ENCODE measurements at regions of chr10 and their contacts with region 1.

Region 1: GRCh38 chr10:8331883-8332729 is 277.6 kb downstream of the GATA3 start:
- DNase-seq: peak; percentile 78 to 96 (median 93)
- ATAC-seq: peak; percentile 97
- H3K4me3 ChIP-seq: peak overlapping the region; percentile 71
- H3K4me3 Mint-ChIP-seq: peak overlapping the region; percentile 65 to 92 (median 84)
- H3K27ac ChIP-seq: peak overlapping the region; percentile 83
- H3K27ac Mint-ChIP-seq: peak overlapping the region; percentile 88 to 97 (median 93)
- H3K4me1 ChIP-seq: peaks cover 9 to 23% of the 10 kb centered on the region in 2 donors
- H3K4me1 Mint-ChIP-seq: peaks cover 21 to 53% (median 40%) of the 10 kb centered on the region in 7 donors
- H3K27me3 ChIP-seq: no peaks in the 10 kb centered on the region
- H3K27me3 Mint-ChIP-seq: peaks cover 0 to 10% (median 0%) of the 10 kb centered on the region in 5 donors

Region 2: DNA sequence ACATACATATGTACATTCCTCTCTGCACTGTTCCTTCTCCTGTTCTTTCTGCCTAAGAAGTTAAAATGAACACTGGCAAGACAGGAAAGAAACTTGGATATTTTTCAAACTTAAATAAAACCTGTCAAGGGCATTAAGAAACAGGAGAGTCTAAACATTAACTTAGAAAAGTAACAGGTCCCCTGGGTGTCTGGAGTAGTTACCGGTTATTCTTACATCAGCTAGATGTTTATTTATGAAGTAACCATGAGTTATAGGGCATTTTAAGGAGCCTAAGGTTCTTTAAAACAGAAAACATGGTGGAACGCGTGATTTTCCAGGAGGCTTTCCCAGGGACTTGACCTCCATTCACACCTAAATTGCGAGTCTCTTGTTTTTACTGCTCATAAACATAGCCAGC is 1900.2 kb before region 1 on chr10:
- CTCF ChIA-PET with region 1: no interaction called
- POLR2A ChIA-PET with region 1: no interaction called
- intact Hi-C with region 1: no loop called
- DNase-seq: no peak
- ATAC-seq: no peak
- H3K4me3 ChIP-seq: no peak overlapping the region
- H3K4me3 Mint-ChIP-seq: no peak overlapping the region
- H3K27ac ChIP-seq: no peak overlapping the region
- H3K27ac Mint-ChIP-seq: peak overlapping the region in 2 of 9 donors; percentile 32 to 75
- H3K4me1 ChIP-seq: no peaks in the 10 kb centered on the region
- H3K4me1 Mint-ChIP-seq: peaks cover 0 to 13% (median 7%) of the 10 kb centered on the region in 7 donors
- H3K27me3 ChIP-seq: no peaks in the 10 kb centered on the region
- H3K27me3 Mint-ChIP-seq: no peaks in the 10 kb centered on the region

Region 3: GRCh38 chr10:7787857-7788638 is 544.1 kb before region 1 on chr10 and contains the starts of genes ATP5F1C and KIN:
- CTCF ChIA-PET with region 1: no interaction called
- POLR2A ChIA-PET with region 1: no interaction called
- intact Hi-C with region 1: loop called in 1 of 2 experiments (anchors 10 kb)
- DNase-seq: peak; percentile 93 to 98 (median 96)
- ATAC-seq: peak; percentile 98
- H3K4me3 ChIP-seq: peak within 1 kb of the TSS; percentile 79
- H3K4me3 Mint-ChIP-seq: no peak within 1 kb of the TSS
- H3K27ac ChIP-seq: peak within 1 kb of the TSS; percentile 84
- H3K27ac Mint-ChIP-seq: peak within 1 kb of the TSS in 1 of 9 donors; percentile 90
- H3K4me1 ChIP-seq: peaks cover 21 to 28% of the 10 kb centered on the region in 2 donors
- H3K4me1 Mint-ChIP-seq: peaks cover 47 to 77% (median 57%) of the 10 kb centered on the region in 7 donors
- H3K27me3 ChIP-seq: no peaks in the 10 kb centered on the region
- H3K27me3 Mint-ChIP-seq: no peaks in the 10 kb centered on the region
- total RNA-seq, gene ATP5F1C: 113 to 290 (median 122) TPM
- total RNA-seq, gene KIN: 7.2 to 18.4 (median 14.3) TPM

Region 4: GRCh38 chr10:8053446-8054290 is 278.4 kb before region 1 on chr10:
- CTCF ChIA-PET with region 1: no interaction called
- POLR2A ChIA-PET with region 1: interaction called, 13 read pairs
- intact Hi-C with region 1: loop called (anchors 1 kb)
- DNase-seq: peak; percentile 73 to 97 (median 89)
- ATAC-seq: peak; percentile 77
- H3K4me3 ChIP-seq: peak overlapping the region; percentile 87
- H3K4me3 Mint-ChIP-seq: peak overlapping the region; percentile 87 to 97 (median 94)
- H3K27ac ChIP-seq: peak overlapping the region; percentile 82
- H3K27ac Mint-ChIP-seq: peak overlapping the region; percentile 88 to 99 (median 95)
- H3K4me1 ChIP-seq: peaks cover 26 to 42% of the 10 kb centered on the region in 2 donors
- H3K4me1 Mint-ChIP-seq: peaks cover 14 to 45% (median 37%) of the 10 kb centered on the region in 7 donors
- H3K27me3 ChIP-seq: peaks cover 19 to 32% of the 10 kb centered on the region in 2 donors
- H3K27me3 Mint-ChIP-seq: peaks cover 20 to 30% (median 22%) of the 10 kb centered on the region in 5 donors

Region 5: DNA sequence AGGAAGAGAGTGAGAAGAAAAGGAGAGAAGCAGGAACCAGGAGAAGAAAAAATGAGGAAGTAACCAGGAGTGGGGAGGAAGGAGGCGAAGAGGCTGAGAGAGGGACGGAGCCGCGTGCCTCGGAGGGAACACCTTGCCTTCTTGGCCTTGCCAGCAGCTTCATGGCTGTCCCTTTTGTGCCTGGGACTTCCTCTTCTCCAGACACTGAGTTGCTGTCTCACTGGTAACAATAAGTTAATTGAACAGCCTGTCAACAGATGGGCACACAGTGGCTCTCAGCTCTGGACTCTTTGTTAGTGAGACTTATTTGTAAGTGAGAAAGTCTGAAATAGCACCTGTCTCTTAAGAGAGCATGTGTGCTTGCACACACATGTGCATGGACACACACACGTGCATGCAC is 194.4 kb before region 1 on chr10:
- CTCF ChIA-PET with region 1: no interaction called
- POLR2A ChIA-PET with region 1: interaction called, 3 read pairs
- intact Hi-C with region 1: loop called (anchors 1 kb)
- DNase-seq: peak in 1 of 9 donors; percentile 25
- ATAC-seq: peak; percentile 40
- H3K4me3 ChIP-seq: peak overlapping the region; percentile 63
- H3K4me3 Mint-ChIP-seq: peak overlapping the region; percentile 84 to 95 (median 88)
- H3K27ac ChIP-seq: peak overlapping the region; percentile 72
- H3K27ac Mint-ChIP-seq: peak overlapping the region; percentile 86 to 98 (median 93)
- H3K4me1 ChIP-seq: peaks cover 3 to 18% of the 10 kb centered on the region in 2 donors
- H3K4me1 Mint-ChIP-seq: peaks cover 24 to 65% (median 39%) of the 10 kb centered on the region in 7 donors
- H3K27me3 ChIP-seq: no peaks in the 10 kb centered on the region
- H3K27me3 Mint-ChIP-seq: peaks cover 0 to 14% (median 10%) of the 10 kb centered on the region in 5 donors

Region 6: GRCh38 chr10:8245131-8245813 is 86.8 kb before region 1 on chr10:
- CTCF ChIA-PET with region 1: no interaction called
- POLR2A ChIA-PET with region 1: interaction called, 5 read pairs
- intact Hi-C with region 1: loop called (anchors 1 kb)
- DNase-seq: peak in 7 of 9 donors; percentile 45 to 75 (median 67)
- ATAC-seq: peak; percentile 86
- H3K4me3 ChIP-seq: no peak overlapping the region
- H3K4me3 Mint-ChIP-seq: peak overlapping the region; percentile 56 to 86 (median 78)
- H3K27ac ChIP-seq: peak overlapping the region; percentile 61
- H3K27ac Mint-ChIP-seq: peak overlapping the region; percentile 80 to 96 (median 91)
- H3K4me1 ChIP-seq: peaks cover 27 to 32% of the 10 kb centered on the region in 2 donors
- H3K4me1 Mint-ChIP-seq: peaks cover 20 to 79% (median 55%) of the 10 kb centered on the region in 7 donors
- H3K27me3 ChIP-seq: no peaks in the 10 kb centered on the region
- H3K27me3 Mint-ChIP-seq: no peaks in the 10 kb centered on the region

Region 7: DNA sequence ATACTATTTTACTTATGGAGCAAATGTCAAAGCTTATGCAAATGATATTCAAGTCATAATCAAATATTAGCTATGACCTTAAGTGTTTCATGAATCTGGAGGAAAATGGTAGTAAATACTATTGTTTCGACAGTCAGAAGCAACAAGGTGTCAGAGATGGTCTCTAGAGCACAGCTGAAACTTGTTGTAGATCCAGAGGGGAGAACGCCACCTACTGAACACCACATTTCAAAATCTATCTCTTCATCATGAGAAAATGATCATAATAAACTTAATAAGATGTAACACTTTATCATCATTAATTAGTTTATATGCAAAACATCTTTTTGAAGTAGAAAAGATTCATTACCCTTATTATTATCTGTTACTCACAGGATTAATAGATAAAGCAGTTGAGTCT is 141.1 kb after region 1 on chr10:
- CTCF ChIA-PET with region 1: no interaction called
- POLR2A ChIA-PET with region 1: no interaction called
- intact Hi-C with region 1: loop called in 1 of 2 experiments (anchors 2 kb)
- DNase-seq: peak in 7 of 9 donors; percentile 8 to 61 (median 36)
- ATAC-seq: peak; percentile 51
- H3K4me3 ChIP-seq: no peak overlapping the region
- H3K4me3 Mint-ChIP-seq: no peak overlapping the region
- H3K27ac ChIP-seq: no peak overlapping the region
- H3K27ac Mint-ChIP-seq: no peak overlapping the region
- H3K4me1 ChIP-seq: no peaks in the 10 kb centered on the region
- H3K4me1 Mint-ChIP-seq: peaks cover 0 to 3% (median 0%) of the 10 kb centered on the region in 7 donors
- H3K27me3 ChIP-seq: no peaks in the 10 kb centered on the region
- H3K27me3 Mint-ChIP-seq: peaks cover 8 to 46% (median 25%) of the 10 kb centered on the region in 5 donors

Region 8: DNA sequence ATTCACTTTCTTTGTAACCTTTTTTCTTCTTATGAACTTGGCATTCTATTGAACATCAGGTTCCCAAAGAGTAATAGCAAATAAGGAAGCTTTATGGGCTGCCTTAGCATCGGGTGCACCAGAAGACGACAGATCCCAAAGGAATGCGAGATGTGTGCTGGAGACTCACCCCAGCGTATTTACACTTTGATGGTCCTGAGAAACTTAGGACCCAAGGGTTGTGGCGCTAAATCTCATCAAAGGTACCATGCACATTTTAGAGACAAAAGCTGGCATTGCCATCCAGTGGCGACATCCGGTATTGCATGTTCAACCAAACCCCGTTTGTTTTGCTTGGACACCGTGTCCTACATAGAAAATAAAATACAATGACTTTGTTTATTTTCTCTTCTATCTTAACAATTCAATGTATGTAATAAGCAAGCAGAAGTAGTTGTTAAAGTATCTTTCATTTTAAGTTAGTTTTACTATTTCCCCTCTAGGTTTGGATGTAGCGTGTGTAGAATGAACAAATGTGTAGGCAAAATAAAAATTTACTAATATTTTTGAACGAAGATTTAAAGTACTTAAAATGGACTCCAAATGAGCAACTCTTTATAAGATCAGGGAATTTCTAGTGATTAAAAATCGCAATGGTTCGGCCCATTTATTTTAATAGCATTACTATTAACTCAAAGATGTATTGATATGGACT is 877.1 kb after region 1 on chr10:
- CTCF ChIA-PET with region 1: no interaction called
- POLR2A ChIA-PET with region 1: no interaction called
- intact Hi-C with region 1: loop called in 1 of 2 experiments (anchors 1 kb)
- DNase-seq: peak; percentile 32 to 75 (median 58)
- ATAC-seq: peak; percentile 68
- H3K4me3 ChIP-seq: no peak overlapping the region
- H3K4me3 Mint-ChIP-seq: no peak overlapping the region
- H3K27ac ChIP-seq: no peak overlapping the region
- H3K27ac Mint-ChIP-seq: no peak overlapping the region
- H3K4me1 ChIP-seq: no peaks in the 10 kb centered on the region
- H3K4me1 Mint-ChIP-seq: peaks cover 2 to 8% (median 6%) of the 10 kb centered on the region in 7 donors
- H3K27me3 ChIP-seq: no peaks in the 10 kb centered on the region
- H3K27me3 Mint-ChIP-seq: peaks cover 4 to 13% (median 6%) of the 10 kb centered on the region in 5 donors